ENCODE measurements at regions of chr14 and their contacts with region 1.

Region 1: GRCh38 chr14:23006544-23007419 is 3.2 kb downstream of the C14orf93 start:
- DNase-seq: peak; percentile 99
- H3K4me3 Mint-ChIP-seq: peak overlapping the region; percentile 92
- H3K27ac Mint-ChIP-seq: peak overlapping the region; percentile 95
- H3K4me1 Mint-ChIP-seq: peaks cover 36% of the 10 kb centered on the region
- H3K27me3 Mint-ChIP-seq: no peaks in the 10 kb centered on the region

Region 2: DNA sequence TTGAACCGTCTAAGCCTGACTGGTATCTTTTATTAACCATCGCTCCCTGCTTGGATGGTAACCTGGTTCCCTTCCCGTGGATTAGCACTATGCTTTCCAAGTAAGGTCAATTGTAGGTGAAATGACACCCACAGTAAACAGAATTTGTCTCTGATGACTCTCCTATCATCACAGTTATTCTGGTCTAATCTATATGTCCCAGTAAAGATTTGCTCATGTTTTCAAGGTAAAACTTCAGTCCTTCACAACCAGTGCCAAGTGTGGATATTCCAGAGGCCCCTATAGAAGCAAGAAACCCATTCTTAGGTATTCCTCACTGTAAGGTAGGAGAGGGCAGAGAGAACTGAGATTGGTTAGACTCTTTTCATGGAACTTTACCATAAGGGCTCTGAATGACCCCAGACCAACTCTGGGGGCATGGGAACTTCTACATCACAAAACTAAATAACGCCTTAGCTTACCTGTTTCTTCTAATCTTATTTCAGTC is 40.0 kb before region 1 on chr14:
- intact Hi-C with region 1: no loop called
- DNase-seq: no peak
- H3K4me3 Mint-ChIP-seq: no peak overlapping the region
- H3K27ac Mint-ChIP-seq: no peak overlapping the region
- H3K4me1 Mint-ChIP-seq: no peaks in the 10 kb centered on the region
- H3K27me3 Mint-ChIP-seq: peaks cover 6% of the 10 kb centered on the region

Region 3: DNA sequence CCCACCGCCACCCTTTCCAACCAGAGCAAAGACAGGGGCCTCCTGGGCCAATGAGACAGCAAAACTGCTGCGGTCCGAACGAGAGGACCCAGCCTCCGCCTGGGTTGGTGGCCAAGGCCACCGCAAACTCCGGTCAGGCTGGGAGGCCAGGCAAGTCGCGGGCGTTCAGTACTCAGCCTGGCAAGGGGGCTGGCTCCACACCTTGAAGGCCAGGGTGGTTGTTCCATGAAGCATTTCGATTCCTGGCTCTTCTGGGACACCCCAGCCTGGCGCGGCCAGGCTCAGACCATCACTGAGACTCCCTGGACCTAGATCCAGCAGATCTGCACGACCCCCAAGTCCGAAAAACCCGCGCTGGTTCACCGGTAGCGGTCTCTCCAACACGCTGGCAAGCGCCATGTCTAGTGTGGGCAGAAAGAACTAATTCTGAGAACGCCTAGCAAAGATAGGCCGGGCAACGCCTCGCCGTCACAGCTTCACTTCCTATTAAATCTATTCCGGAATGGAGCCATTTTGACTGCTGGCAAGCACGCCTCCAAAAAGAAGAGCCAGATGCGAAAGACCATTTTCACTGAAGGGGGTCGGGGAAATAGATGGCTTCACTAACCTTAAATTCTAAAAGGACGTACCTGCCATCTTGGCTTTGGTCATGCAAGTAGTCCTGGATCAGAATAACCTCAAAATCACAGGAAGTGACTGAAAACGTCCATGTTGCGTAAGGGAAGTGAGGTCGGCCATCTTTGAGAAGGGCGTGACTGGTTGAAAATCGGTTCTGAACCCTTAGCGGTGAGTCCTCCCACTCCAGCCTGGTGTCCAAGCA is 27.9 kb after region 1 on chr14 and contains the start of gene PSMB5:
- intact Hi-C with region 1: loop called (anchors 1 kb)
- DNase-seq: peak; percentile 96
- H3K4me3 Mint-ChIP-seq: peak within 1 kb of the TSS; percentile 81
- H3K27ac Mint-ChIP-seq: peak within 1 kb of the TSS; percentile 88
- H3K4me1 Mint-ChIP-seq: peaks cover 24% of the 10 kb centered on the region
- H3K27me3 Mint-ChIP-seq: no peaks in the 10 kb centered on the region
- total RNA-seq, gene PSMB5: 150 TPM in 2 replicates

Measured in activated CD4-positive, alpha-beta T cell treated with anti-CD3 and anti-CD28 coated beads, Interleukin-2, amount 10 ng/mL, durations not matched to agents 24 days and 14 days (primary cell).